ENCODE measurements at regions of chr17 and their contacts with region 1.

Region 1: DNA sequence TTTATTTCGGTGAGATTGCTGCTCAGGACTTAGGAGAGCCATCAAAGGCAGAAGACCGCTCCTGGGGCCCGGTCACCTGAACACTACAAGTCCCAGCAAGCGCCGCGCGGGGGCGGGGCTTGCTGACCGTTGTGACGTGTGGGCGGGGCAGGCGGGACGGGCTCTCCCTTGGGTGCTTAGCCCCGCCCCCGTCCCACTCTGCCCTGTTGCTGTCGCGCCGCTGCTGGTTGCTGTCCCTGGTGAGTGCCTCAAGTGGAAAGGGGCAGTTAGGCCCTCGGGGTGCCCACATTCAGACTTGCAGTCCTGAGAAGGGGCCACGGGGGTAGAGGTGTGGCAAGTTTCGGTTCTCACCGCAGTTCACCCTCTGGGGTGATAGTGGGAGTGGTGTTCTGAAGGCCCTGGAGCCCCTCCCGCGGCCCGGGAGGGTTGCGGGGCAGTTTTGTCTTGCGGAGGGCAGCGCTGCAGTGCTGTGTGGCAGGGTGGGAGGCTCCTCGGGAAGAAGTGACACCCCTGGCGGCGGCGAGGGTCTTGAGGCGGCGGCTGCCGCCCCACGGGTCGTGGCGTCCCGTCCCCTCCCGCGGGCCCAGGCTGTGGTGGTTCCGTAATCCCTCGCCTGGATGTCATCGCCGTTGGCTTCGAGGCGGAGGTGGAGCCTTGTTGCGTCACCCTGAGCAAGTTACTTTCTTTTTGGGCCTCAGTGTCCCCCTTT is at the start of gene CALCOCO2:
- DNase-seq: peak; percentile 69 to 95 (median 88)
- ATAC-seq: peak; percentile 83
- H3K4me3 ChIP-seq: peak within 1 kb of the TSS; percentile 89 to 100
- H3K4me3 Mint-ChIP-seq: peak within 1 kb of the TSS; percentile 97
- H3K27ac ChIP-seq: peak within 1 kb of the TSS; percentile 92 to 93
- H3K27ac Mint-ChIP-seq: peak within 1 kb of the TSS; percentile 95
- H3K4me1 ChIP-seq: peaks cover 28% of the 10 kb centered on the region
- H3K4me1 Mint-ChIP-seq: peaks cover 50% of the 10 kb centered on the region
- H3K27me3 ChIP-seq: no peaks in the 10 kb centered on the region
- H3K27me3 Mint-ChIP-seq: peaks cover 2% of the 10 kb centered on the region
- CTCF ChIP-seq: no peak
- total RNA-seq, gene CALCOCO2: 112 to 121 TPM

Region 2: GRCh38 chr17:48816774-48817590 is 14.0 kb before region 1 on chr17 and contains the start of gene TTLL6:
- CTCF ChIA-PET with region 1: interaction called, 4 read pairs
- POLR2A ChIA-PET with region 1: interaction called, 3 read pairs
- intact Hi-C with region 1: loop called in 1 of 2 experiments (anchors 1 kb)
- DNase-seq: peak; percentile 47 to 89 (median 74)
- ATAC-seq: peak; percentile 99
- H3K4me3 ChIP-seq: peak within 1 kb of the TSS; percentile 39 to 66
- H3K4me3 Mint-ChIP-seq: peak within 1 kb of the TSS; percentile 81
- H3K27ac ChIP-seq: no peak within 1 kb of the TSS
- H3K27ac Mint-ChIP-seq: no peak within 1 kb of the TSS
- H3K4me1 ChIP-seq: peaks cover 11% of the 10 kb centered on the region
- H3K4me1 Mint-ChIP-seq: peaks cover 11% of the 10 kb centered on the region
- H3K27me3 ChIP-seq: peaks cover 17 to 20% of the 10 kb centered on the region in 2 experiments
- H3K27me3 Mint-ChIP-seq: peaks cover 40% of the 10 kb centered on the region
- CTCF ChIP-seq: no peak
- total RNA-seq, gene TTLL6: not detected

Region 3: GRCh38 chr17:48841395-48841831 is 10.4 kb after region 1 on chr17:
- CTCF ChIA-PET with region 1: interaction called, 5 read pairs
- POLR2A ChIA-PET with region 1: interaction called, 3 read pairs
- intact Hi-C with region 1: loop called (anchors 1 kb)
- DNase-seq: peak in 5 of 9 experiments; percentile 16 to 81 (median 39)
- ATAC-seq: peak; percentile 90
- H3K4me3 ChIP-seq: peak overlapping the region; percentile 38 to 41
- H3K4me3 Mint-ChIP-seq: peak overlapping the region; percentile 79
- H3K27ac ChIP-seq: peak overlapping the region; percentile 53 to 82
- H3K27ac Mint-ChIP-seq: peak overlapping the region; percentile 95
- H3K4me1 ChIP-seq: peaks cover 45% of the 10 kb centered on the region
- H3K4me1 Mint-ChIP-seq: peaks cover 52% of the 10 kb centered on the region
- H3K27me3 ChIP-seq: no peaks in the 10 kb centered on the region
- H3K27me3 Mint-ChIP-seq: no peaks in the 10 kb centered on the region
- CTCF ChIP-seq: no peak

Region 4: GRCh38 chr17:48908047-48908843 is 77.3 kb after region 1 on chr17 and contains the start of gene UBE2Z:
- CTCF ChIA-PET with region 1: no interaction called
- POLR2A ChIA-PET with region 1: interaction called, 5 read pairs
- intact Hi-C with region 1: loop called (anchors 1 kb)
- DNase-seq: peak; percentile 79 to 96 (median 88)
- ATAC-seq: peak; percentile 87
- H3K4me3 ChIP-seq: peak within 1 kb of the TSS; percentile 74 to 77
- H3K4me3 Mint-ChIP-seq: peak within 1 kb of the TSS; percentile 95
- H3K27ac ChIP-seq: peak within 1 kb of the TSS; percentile 88 to 95
- H3K27ac Mint-ChIP-seq: peak within 1 kb of the TSS; percentile 99
- H3K4me1 ChIP-seq: peaks cover 39% of the 10 kb centered on the region
- H3K4me1 Mint-ChIP-seq: peaks cover 49% of the 10 kb centered on the region
- H3K27me3 ChIP-seq: no peaks in the 10 kb centered on the region
- H3K27me3 Mint-ChIP-seq: no peaks in the 10 kb centered on the region
- CTCF ChIP-seq: no peak
- total RNA-seq, gene UBE2Z: 56.4 to 56.7 TPM